Heart left ventricle (tissue), 16 donors: ENCODE measurements at regions of chr10 and their contacts with region 1.

Region 1: DNA sequence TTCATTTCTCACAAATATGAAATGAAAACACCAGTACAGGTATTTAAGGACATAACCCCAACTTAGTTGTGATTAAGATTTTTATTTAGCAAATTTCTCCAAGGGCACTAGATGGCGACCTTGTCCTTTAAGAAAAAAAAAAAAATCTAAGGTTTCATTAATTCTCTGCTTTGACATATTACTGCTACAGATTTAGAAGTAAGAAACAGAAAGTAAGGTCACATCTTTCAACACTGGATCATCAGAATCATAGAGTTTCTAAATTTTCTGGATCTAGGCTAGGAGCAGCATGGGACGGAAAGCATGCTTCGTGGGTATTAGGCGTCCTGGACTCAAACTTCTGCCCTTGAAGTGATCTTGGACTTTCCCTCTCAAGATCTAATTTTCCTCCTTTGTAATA is 85.5 kb upstream of the PRKG1 start:
- DNase-seq: no peak
- ATAC-seq: no peak
- H3K4me3 ChIP-seq: peak overlapping the region in 8 of 12 donors; percentile 15 to 90 (median 77)
- H3K27ac ChIP-seq: peak overlapping the region in 9 of 12 donors; percentile 28 to 97 (median 41)
- H3K4me1 ChIP-seq: peaks cover 0 to 21% (median 0%) of the 10 kb centered on the region in 12 donors
- H3K27me3 ChIP-seq: peaks cover 0 to 29% (median 0%) of the 10 kb centered on the region in 9 donors
- CTCF ChIP-seq: peak; percentile 18 to 60 (median 44)
- POLR2A ChIP-seq: no peak

Region 2: GRCh38 chr10:50788951-50789945 is 199.5 kb before region 1 on chr10:
- intact Hi-C with region 1: loop called in 1 of 10 experiments (anchors 5 kb)
- DNase-seq: no peak
- ATAC-seq: peak in 3 of 4 donors; percentile 53 to 74 (median 61)
- H3K4me3 ChIP-seq: no peak overlapping the region
- H3K27ac ChIP-seq: no peak overlapping the region
- H3K4me1 ChIP-seq: peaks cover 0 to 5% (median 0%) of the 10 kb centered on the region in 12 donors
- H3K27me3 ChIP-seq: no peaks in the 10 kb centered on the region
- CTCF ChIP-seq: peak in 11 of 12 donors; percentile 16 to 50 (median 38)
- POLR2A ChIP-seq: no peak

Region 3: GRCh38 chr10:50909334-50910014 is 79.3 kb before region 1 on chr10:
- intact Hi-C with region 1: no loop called
- DNase-seq: peak in 2 of 5 donors; percentile 22 to 41
- ATAC-seq: peak in 1 of 4 donors; percentile 31
- H3K4me3 ChIP-seq: no peak overlapping the region
- H3K27ac ChIP-seq: no peak overlapping the region
- H3K4me1 ChIP-seq: peaks cover 0 to 6% (median 0%) of the 10 kb centered on the region in 12 donors
- H3K27me3 ChIP-seq: no peaks in the 10 kb centered on the region
- CTCF ChIP-seq: no peak
- POLR2A ChIP-seq: no peak

Region 4: GRCh38 chr10:50937230-50937907 is 51.4 kb before region 1 on chr10:
- intact Hi-C with region 1: loop called in 1 of 10 experiments (anchors 5 kb)
- DNase-seq: no peak
- ATAC-seq: peak in 1 of 4 donors; percentile 31
- H3K4me3 ChIP-seq: no peak overlapping the region
- H3K27ac ChIP-seq: no peak overlapping the region
- H3K4me1 ChIP-seq: peaks cover 0 to 7% (median 0%) of the 10 kb centered on the region in 12 donors
- H3K27me3 ChIP-seq: no peaks in the 10 kb centered on the region
- CTCF ChIP-seq: peak in 10 of 12 donors; percentile 25 to 67 (median 50)
- POLR2A ChIP-seq: no peak

Region 5: GRCh38 chr10:51422311-51423120 is 433.7 kb after region 1 on chr10:
- intact Hi-C with region 1: loop called in 2 of 10 experiments (anchors 10 kb)
- DNase-seq: peak; percentile 52 to 61 (median 57)
- ATAC-seq: peak; percentile 47 to 72 (median 60)
- H3K4me3 ChIP-seq: no peak overlapping the region
- H3K27ac ChIP-seq: peak overlapping the region; percentile 52 to 80 (median 72)
- H3K4me1 ChIP-seq: peaks cover 0 to 48% (median 10%) of the 10 kb centered on the region in 12 donors
- H3K27me3 ChIP-seq: no peaks in the 10 kb centered on the region
- CTCF ChIP-seq: peak; percentile 39 to 84 (median 70)
- POLR2A ChIP-seq: no peak

Region 6: DNA sequence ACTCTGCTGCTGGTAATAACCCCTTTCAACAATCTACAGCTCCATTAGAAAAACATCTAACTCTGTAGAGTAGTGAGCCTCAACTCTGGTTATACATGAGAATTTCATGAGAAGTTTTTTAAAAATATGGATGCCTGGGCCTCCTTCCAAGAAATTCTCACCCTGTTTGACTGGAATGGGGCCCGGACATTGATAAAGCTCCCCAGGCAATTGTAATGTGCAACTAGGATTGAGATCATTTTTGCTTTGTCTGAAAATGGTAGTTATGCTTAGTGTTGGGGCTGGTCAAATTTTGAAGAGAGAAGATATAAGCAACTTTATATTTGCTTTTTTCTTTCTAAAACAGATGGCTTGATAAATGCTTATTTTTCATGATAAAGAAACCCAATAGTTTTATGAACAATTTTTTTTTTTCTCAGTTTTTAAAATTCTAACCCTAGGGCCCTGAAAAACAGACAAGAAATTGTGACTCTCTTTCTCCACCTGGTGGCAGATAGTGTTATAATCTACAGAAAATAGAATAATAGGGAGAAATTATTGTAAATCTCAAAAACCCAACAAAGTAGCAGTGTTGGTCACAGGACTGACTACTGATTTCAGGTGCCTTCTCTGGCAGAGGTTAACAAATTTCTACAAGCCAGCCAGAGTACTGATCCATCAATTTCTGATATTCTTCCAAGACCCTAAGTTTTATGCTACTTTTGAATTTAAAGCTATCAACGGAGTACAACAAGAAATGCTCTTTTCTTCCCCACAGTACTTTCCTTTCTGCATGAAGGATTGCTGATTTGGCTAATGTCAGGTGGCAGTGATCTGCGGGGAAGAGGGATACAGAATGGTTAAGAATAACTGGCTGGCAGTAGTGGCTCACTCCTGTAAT is 1500.1 kb after region 1 on chr10:
- intact Hi-C with region 1: loop called in 3 of 10 experiments (anchors 10 kb)
- DNase-seq: no peak
- ATAC-seq: no peak
- H3K4me3 ChIP-seq: no peak overlapping the region
- H3K27ac ChIP-seq: no peak overlapping the region
- H3K4me1 ChIP-seq: no peaks in the 10 kb centered on the region
- H3K27me3 ChIP-seq: no peaks in the 10 kb centered on the region
- CTCF ChIP-seq: peak; percentile 26 to 69 (median 54)
- POLR2A ChIP-seq: no peak